Left cardiac atrium (tissue), 4 donors: ENCODE measurements at regions of chr2 and their contacts with region 1.

Region 1: GRCh38 chr2:19685731-19686130 is 216.1 kb downstream of the TTC32 start:
- DNase-seq: no peak
- ATAC-seq: no peak

Region 2: GRCh38 chr2:19649785-19650380 is 35.8 kb before region 1 on chr2:
- intact Hi-C with region 1: loop called in 1 of 2 experiments (anchors 5 kb)
- DNase-seq: peak; percentile 69
- ATAC-seq: peak; percentile 91 to 96